B cell (primary cell): ENCODE measurements at regions of chr16 and their contacts with region 1.

Region 1: GRCh38 chr16:57084257-57084770 is 8.1 kb upstream of the CPNE2 start:
- DNase-seq: peak; percentile 86
- ATAC-seq: peak; percentile 89
- H3K4me3 ChIP-seq: no peak overlapping the region
- H3K4me3 Mint-ChIP-seq: no peak overlapping the region
- H3K27ac ChIP-seq: no peak overlapping the region
- H3K27ac Mint-ChIP-seq: peak overlapping the region; percentile 13
- H3K4me1 ChIP-seq: peaks cover 4 to 8% of the 10 kb centered on the region in 2 donors
- H3K4me1 Mint-ChIP-seq: peaks cover 11% of the 10 kb centered on the region
- H3K27me3 ChIP-seq: no peaks in the 10 kb centered on the region
- H3K27me3 Mint-ChIP-seq: no peaks in the 10 kb centered on the region
- CTCF ChIP-seq: peak; percentile 98

Region 2: DNA sequence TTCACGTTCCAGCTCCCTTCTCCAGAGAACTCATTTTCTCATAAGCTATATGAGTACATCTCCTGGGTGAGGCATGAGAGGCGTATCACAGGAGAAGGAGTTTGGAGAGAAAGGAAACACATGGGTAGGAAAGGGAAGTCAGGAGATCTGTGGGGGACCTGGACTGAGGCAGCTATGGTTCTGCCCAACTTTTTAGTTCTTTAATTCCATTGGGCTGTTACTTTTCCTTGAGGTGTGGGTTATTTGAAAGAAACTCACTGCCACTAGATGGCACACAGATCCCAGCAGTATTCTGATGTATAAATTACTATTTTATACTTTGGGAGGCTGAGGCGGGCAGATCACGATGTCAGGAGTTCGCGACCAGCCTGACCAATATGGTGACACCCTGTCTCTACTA is 290.8 kb before region 1 on chr16:
- CTCF ChIA-PET with region 1: interaction called, 12 read pairs
- POLR2A ChIA-PET with region 1: no interaction called
- intact Hi-C with region 1: no loop called
- DNase-seq: peak; percentile 33
- ATAC-seq: no peak
- H3K4me3 ChIP-seq: no peak overlapping the region
- H3K4me3 Mint-ChIP-seq: no peak overlapping the region
- H3K27ac ChIP-seq: no peak overlapping the region
- H3K27ac Mint-ChIP-seq: no peak overlapping the region
- H3K4me1 ChIP-seq: no peaks in the 10 kb centered on the region
- H3K4me1 Mint-ChIP-seq: no peaks in the 10 kb centered on the region
- H3K27me3 ChIP-seq: no peaks in the 10 kb centered on the region
- H3K27me3 Mint-ChIP-seq: no peaks in the 10 kb centered on the region
- CTCF ChIP-seq: no peak

Region 3: GRCh38 chr16:57022445-57022844 is 61.9 kb before region 1 on chr16:
- CTCF ChIA-PET with region 1: no interaction called
- POLR2A ChIA-PET with region 1: no interaction called
- intact Hi-C with region 1: no loop called
- DNase-seq: no peak
- ATAC-seq: no peak
- H3K4me3 ChIP-seq: no peak overlapping the region
- H3K4me3 Mint-ChIP-seq: no peak overlapping the region
- H3K27ac ChIP-seq: no peak overlapping the region
- H3K27ac Mint-ChIP-seq: peak overlapping the region; percentile 41
- H3K4me1 ChIP-seq: peaks cover 0 to 42% of the 10 kb centered on the region in 2 donors
- H3K4me1 Mint-ChIP-seq: peaks cover 19% of the 10 kb centered on the region
- H3K27me3 ChIP-seq: no peaks in the 10 kb centered on the region
- H3K27me3 Mint-ChIP-seq: no peaks in the 10 kb centered on the region
- CTCF ChIP-seq: no peak

Region 4: DNA sequence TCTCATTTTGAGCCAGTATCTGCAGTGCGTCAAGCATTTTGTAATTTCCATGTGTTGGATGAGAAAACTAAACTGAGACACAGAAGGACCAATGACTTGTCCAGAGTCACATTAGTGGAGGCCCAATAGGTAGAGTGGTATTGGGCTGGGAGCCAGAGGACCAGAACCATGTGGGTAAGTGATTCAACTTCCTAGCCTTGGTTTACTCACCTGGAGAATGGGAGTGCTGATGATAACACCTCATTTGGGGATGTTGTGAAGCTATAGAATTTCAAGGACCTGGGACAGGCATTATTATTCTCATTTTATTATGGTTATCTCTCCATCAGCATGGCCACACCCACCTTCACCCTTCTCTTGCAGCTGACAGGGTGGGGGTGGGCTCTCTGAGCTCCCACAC is 16.1 kb after region 1 on chr16:
- CTCF ChIA-PET with region 1: interaction called, 36 read pairs
- POLR2A ChIA-PET with region 1: no interaction called
- intact Hi-C with region 1: no loop called
- DNase-seq: no peak
- ATAC-seq: no peak
- H3K4me3 ChIP-seq: no peak overlapping the region
- H3K4me3 Mint-ChIP-seq: no peak overlapping the region
- H3K27ac ChIP-seq: no peak overlapping the region
- H3K27ac Mint-ChIP-seq: no peak overlapping the region
- H3K4me1 ChIP-seq: no peaks in the 10 kb centered on the region
- H3K4me1 Mint-ChIP-seq: no peaks in the 10 kb centered on the region
- H3K27me3 ChIP-seq: peaks cover 0 to 6% (median 0%) of the 10 kb centered on the region in 4 experiments
- H3K27me3 Mint-ChIP-seq: peaks cover 12% of the 10 kb centered on the region
- CTCF ChIP-seq: no peak

Region 5: GRCh38 chr16:57167953-57168352 is 83.6 kb after region 1 on chr16:
- CTCF ChIA-PET with region 1: interaction called, 12 read pairs
- POLR2A ChIA-PET with region 1: no interaction called
- intact Hi-C with region 1: loop called (anchors 1 kb)
- DNase-seq: peak; percentile 73
- ATAC-seq: peak; percentile 60
- H3K4me3 ChIP-seq: no peak overlapping the region
- H3K4me3 Mint-ChIP-seq: no peak overlapping the region
- H3K27ac ChIP-seq: no peak overlapping the region
- H3K27ac Mint-ChIP-seq: no peak overlapping the region
- H3K4me1 ChIP-seq: no peaks in the 10 kb centered on the region
- H3K4me1 Mint-ChIP-seq: peaks cover 8% of the 10 kb centered on the region
- H3K27me3 ChIP-seq: no peaks in the 10 kb centered on the region
- H3K27me3 Mint-ChIP-seq: no peaks in the 10 kb centered on the region
- CTCF ChIP-seq: peak; percentile 73